ENCODE measurements at regions of chr19 and their contacts with region 1.

Region 1: GRCh38 chr19:6649185-6649584 is 20.8 kb downstream of the TNFSF14 start:
- DNase-seq: no peak
- H3K4me3 ChIP-seq: no peak overlapping the region
- H3K4me3 Mint-ChIP-seq: peak overlapping the region in 1 of 2 donors; percentile 42
- H3K27ac ChIP-seq: no peak overlapping the region
- H3K27ac Mint-ChIP-seq: no peak overlapping the region
- H3K4me1 ChIP-seq: no peaks in the 10 kb centered on the region
- H3K4me1 Mint-ChIP-seq: no peaks in the 10 kb centered on the region
- H3K27me3 ChIP-seq: peaks cover 40 to 63% of the 10 kb centered on the region in 2 donors
- H3K27me3 Mint-ChIP-seq: peaks cover 62 to 82% (median 72%) of the 10 kb centered on the region in 3 donors
- CTCF ChIP-seq: no peak

Region 2: DNA sequence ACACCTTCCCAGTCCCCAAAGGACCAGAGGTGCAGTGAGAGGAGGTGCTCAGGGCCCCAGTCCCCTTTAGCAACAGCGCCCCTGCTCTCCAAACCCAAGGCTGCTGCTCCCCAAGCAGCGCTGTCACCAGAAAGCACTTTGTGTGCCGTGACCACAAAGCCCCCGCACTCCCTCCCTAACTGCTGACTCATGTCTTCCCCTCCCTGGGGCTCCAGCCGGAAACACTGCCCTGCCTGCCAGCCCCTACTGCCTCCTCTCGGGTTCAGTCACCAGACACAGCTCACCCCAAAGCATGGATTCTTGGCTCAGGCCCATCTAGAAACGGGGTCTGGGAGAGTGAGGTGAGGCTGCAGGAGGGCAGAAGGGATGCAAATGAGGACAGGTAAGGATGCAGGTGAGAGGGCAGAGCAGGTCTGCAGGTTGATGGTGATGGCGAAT is 25.7 kb after region 1 on chr19:
- intact Hi-C with region 1: loop called in 1 of 2 experiments (anchors 5 kb)
- DNase-seq: peak; percentile 78 to 91 (median 89)
- H3K4me3 ChIP-seq: peak overlapping the region in 2 of 3 experiments; percentile 1 to 48
- H3K4me3 Mint-ChIP-seq: peak overlapping the region; percentile 58 to 82
- H3K27ac ChIP-seq: peak overlapping the region; percentile 32 to 33
- H3K27ac Mint-ChIP-seq: peak overlapping the region; percentile 76 to 94 (median 85)
- H3K4me1 ChIP-seq: peaks cover 52 to 56% of the 10 kb centered on the region in 2 donors
- H3K4me1 Mint-ChIP-seq: peaks cover 60% of the 10 kb centered on the region
- H3K27me3 ChIP-seq: no peaks in the 10 kb centered on the region
- H3K27me3 Mint-ChIP-seq: peaks cover 0 to 12% (median 1%) of the 10 kb centered on the region in 3 donors
- CTCF ChIP-seq: no peak

Region 3: GRCh38 chr19:6710273-6711077 is 61.3 kb after region 1 on chr19:
- intact Hi-C with region 1: loop called in 1 of 2 experiments (anchors 10 kb)
- DNase-seq: peak; percentile 31 to 50 (median 45)
- H3K4me3 ChIP-seq: no peak overlapping the region
- H3K4me3 Mint-ChIP-seq: peak overlapping the region in 1 of 2 donors; percentile 75
- H3K27ac ChIP-seq: no peak overlapping the region
- H3K27ac Mint-ChIP-seq: peak overlapping the region in 1 of 7 donors; percentile 30
- H3K4me1 ChIP-seq: no peaks in the 10 kb centered on the region
- H3K4me1 Mint-ChIP-seq: peaks cover 9% of the 10 kb centered on the region
- H3K27me3 ChIP-seq: peaks cover 3 to 30% of the 10 kb centered on the region in 2 donors
- H3K27me3 Mint-ChIP-seq: peaks cover 43 to 55% (median 44%) of the 10 kb centered on the region in 3 donors
- CTCF ChIP-seq: peak; percentile 49

Measured in CD14-positive monocyte (primary cell).